Esophagus muscularis mucosa (tissue), 4 donors: ENCODE measurements at regions of chr11 and their contacts with region 1.

Region 1: GRCh38 chr11:44936525-44936924 is 14.2 kb downstream of the TP53I11 start:
- DNase-seq: peak; percentile 96
- H3K4me3 ChIP-seq: no peak overlapping the region
- H3K27ac ChIP-seq: no peak overlapping the region
- H3K4me1 ChIP-seq: peaks cover 22 to 51% (median 38%) of the 10 kb centered on the region in 4 donors
- H3K27me3 ChIP-seq: no peaks in the 10 kb centered on the region
- CTCF ChIP-seq: peak in 2 of 3 experiments; percentile 96 to 98
- EP300 ChIP-seq: no peak
- POLR2A ChIP-seq: no peak

Region 2: DNA sequence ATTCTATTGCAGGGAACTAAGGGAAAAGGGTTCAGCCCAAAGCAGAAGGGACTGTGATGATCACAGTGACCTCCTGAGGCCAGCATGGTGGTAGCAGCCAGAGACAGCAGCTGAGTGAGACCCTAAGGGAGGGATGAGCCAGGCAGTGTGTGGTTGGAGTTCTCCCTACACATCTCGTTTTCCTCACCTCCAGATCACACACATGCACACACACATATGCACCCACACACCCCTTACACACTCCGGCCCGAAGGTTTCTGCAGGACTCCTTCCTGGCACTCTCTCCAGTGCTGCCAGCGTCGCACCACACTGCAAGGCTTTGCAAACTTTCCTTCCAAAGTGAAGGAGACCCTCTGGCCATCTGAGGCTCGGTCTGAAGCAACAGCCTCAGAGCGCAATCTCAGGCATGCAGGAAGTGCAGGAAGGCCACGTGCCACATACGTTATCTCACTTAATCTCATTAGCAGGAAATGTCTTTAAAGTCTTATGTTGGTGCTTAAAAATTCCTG is 41.0 kb after region 1 on chr11:
- intact Hi-C with region 1: no loop called
- DNase-seq: no peak
- H3K4me3 ChIP-seq: no peak overlapping the region
- H3K27ac ChIP-seq: no peak overlapping the region
- H3K4me1 ChIP-seq: peaks cover 13 to 29% (median 18%) of the 10 kb centered on the region in 4 donors
- H3K27me3 ChIP-seq: no peaks in the 10 kb centered on the region
- CTCF ChIP-seq: no peak
- EP300 ChIP-seq: no peak
- POLR2A ChIP-seq: no peak

Region 3: GRCh38 chr11:45102810-45103621 is 166.5 kb after region 1 on chr11:
- intact Hi-C with region 1: loop called (anchors 1 kb)
- DNase-seq: peak; percentile 92
- H3K4me3 ChIP-seq: no peak overlapping the region
- H3K27ac ChIP-seq: no peak overlapping the region
- H3K4me1 ChIP-seq: peaks cover 8 to 21% (median 13%) of the 10 kb centered on the region in 4 donors
- H3K27me3 ChIP-seq: peaks cover 0 to 29% (median 0%) of the 10 kb centered on the region in 4 donors
- CTCF ChIP-seq: peak in 2 of 3 experiments; percentile 93 to 94
- EP300 ChIP-seq: no peak
- POLR2A ChIP-seq: no peak

Region 4: DNA sequence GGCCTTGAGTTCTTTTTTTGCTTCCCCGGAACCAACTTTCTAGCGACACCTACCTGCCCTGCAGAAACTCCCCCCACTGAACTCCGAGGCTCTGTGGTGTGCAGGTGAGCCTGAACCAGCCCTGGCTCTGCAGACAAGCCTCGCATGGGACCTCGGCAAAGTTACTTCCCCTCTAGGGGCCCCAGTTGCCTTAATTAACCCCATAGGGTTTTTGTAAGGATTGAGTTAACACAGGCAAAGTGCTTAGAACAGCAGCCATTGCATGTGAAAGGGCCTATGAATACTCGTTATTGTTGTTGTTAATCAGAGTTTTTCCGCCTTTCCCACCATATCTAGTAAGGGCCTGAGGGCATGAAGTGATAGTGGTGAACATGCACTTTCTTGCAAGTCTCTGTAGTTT is 362.2 kb after region 1 on chr11:
- intact Hi-C with region 1: loop called (anchors 10 kb)
- DNase-seq: peak; percentile 75
- H3K4me3 ChIP-seq: no peak overlapping the region
- H3K27ac ChIP-seq: no peak overlapping the region
- H3K4me1 ChIP-seq: no peaks in the 10 kb centered on the region
- H3K27me3 ChIP-seq: no peaks in the 10 kb centered on the region
- CTCF ChIP-seq: no peak
- EP300 ChIP-seq: no peak
- POLR2A ChIP-seq: no peak